Activated CD4-positive, alpha-beta T cell treated with anti-CD3 and anti-CD28 coated beads, Interleukin-2, amount 10 ng/mL, durations not matched to agents 24 days and 14 days (primary cell): ENCODE measurements at regions of chr2 and their contacts with region 1.

Region 1: GRCh38 chr2:190843874-190844699 is 36.5 kb upstream of the GLS start:
- DNase-seq: peak; percentile 72
- H3K4me3 Mint-ChIP-seq: peak overlapping the region; percentile 60
- H3K27ac Mint-ChIP-seq: peak overlapping the region; percentile 87
- H3K4me1 Mint-ChIP-seq: peaks cover 25% of the 10 kb centered on the region
- H3K27me3 Mint-ChIP-seq: no peaks in the 10 kb centered on the region

Region 2: DNA sequence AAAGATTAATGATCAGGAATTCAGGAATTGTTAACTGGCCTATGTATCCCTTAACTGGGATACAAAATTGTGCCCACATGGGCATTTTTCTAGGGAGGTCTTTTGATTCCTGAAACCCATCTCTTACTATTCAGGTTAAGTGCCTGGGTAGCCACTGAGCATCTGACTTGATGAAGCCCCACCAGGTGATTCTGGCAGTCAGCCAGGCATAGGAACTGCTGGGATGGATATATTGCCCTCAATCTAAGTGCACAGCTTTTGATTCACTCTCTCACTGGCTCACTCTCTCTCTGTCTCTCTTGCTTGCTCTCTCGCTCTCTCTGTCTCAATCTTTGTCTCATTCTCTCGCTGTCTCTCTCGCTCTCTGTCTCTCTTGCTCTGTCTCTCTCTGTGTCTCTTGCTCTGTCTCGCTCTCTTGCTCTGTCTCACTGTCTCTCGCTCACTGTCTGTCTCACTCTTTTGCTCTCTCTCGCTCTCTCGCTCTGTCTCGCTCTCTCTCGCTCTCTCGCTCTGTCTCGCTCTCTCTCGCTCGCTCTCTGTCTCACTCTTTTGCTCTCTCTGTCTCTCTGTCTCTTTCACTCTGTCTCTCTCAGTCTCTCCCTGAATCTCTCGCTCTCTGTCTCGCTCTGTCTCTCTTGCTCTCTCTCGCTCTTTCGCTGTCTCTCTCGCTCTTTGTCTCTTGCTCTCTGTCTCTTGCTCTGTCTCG is 478.4 kb before region 1 on chr2:
- intact Hi-C with region 1: no loop called
- DNase-seq: no peak
- H3K4me3 Mint-ChIP-seq: no peak overlapping the region
- H3K27ac Mint-ChIP-seq: no peak overlapping the region
- H3K4me1 Mint-ChIP-seq: peaks cover 8% of the 10 kb centered on the region
- H3K27me3 Mint-ChIP-seq: no peaks in the 10 kb centered on the region

Region 3: DNA sequence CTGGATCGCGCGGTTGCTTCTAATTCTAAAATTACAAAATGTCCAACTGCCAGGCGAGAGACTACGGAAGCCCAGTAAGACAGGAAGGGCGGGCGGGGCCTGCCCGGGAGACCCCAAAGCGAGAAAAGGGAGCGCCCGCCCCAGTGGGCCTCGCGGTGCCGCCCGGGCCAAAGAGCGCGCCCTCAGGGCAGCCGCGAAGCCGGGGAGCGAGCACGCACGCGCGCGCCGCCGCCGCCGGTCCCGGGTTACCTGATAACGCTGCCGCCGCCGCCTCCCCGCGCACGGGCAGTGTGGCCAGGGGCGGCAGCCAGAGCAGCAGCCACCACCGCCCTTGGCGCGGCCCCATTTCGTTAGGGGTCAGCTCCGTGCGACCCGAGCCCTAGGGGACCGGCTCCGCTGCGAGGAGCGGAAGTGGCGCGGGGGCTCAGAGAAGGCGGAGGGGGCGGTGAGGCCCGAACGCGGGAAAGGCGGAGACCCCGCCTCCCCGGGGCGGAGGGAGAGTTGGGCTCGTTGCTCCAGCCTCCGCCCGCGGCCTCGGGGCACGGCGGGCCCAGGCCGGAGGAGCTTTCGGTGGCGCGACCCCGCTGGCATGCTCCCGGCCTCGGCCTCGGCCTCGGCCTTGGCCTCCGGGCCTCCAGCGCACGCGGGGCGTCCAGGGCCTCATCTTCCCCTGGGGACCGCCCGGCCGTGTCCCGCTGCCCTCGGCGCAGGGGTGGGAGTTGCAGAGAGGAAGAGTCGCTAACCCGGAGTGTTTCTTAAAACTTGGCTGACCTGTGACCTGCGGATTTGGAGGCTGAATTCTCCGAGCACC is 309.6 kb before region 1 on chr2 and contains the start of gene NEMP2:
- intact Hi-C with region 1: loop called (anchors 2 kb)
- DNase-seq: peak; percentile 95
- H3K4me3 Mint-ChIP-seq: peak within 1 kb of the TSS; percentile 93
- H3K27ac Mint-ChIP-seq: peak within 1 kb of the TSS; percentile 99
- H3K4me1 Mint-ChIP-seq: peaks cover 41% of the 10 kb centered on the region
- H3K27me3 Mint-ChIP-seq: no peaks in the 10 kb centered on the region
- total RNA-seq, gene NEMP2: 16.4 and 19.0 TPM in 2 replicates

Region 4: DNA sequence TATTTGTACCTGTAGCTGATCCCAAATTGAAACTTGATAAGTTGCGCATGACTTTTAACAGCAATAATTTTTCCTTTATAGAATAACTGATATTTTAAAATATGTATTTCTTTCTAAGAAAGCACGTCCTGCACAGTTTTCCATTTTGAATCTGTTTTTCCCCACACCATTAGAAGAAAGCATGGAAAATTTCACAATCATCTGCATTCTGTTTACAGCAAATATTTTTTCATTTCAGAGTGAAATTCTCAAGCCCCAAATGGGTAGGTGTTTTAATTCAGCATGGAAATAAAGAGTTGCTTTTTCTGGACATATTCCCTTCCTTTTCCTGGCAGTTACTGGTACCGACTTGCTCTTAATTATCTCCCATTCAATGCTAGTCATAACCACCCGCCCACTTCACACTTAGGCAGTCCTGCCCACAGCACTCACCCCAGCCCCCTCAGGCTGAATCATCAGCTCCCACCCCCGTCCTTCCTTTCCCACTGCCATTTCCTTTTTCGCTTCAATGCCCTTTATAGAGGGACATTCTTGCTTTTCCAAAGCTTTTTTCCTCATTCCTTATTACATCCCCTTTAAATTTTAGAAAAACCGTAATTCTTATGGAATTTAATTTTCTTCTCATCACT is 52.6 kb before region 1 on chr2:
- intact Hi-C with region 1: loop called (anchors 1 kb)
- DNase-seq: no peak
- H3K4me3 Mint-ChIP-seq: peak overlapping the region; percentile 53
- H3K27ac Mint-ChIP-seq: peak overlapping the region; percentile 86
- H3K4me1 Mint-ChIP-seq: peaks cover 66% of the 10 kb centered on the region
- H3K27me3 Mint-ChIP-seq: no peaks in the 10 kb centered on the region

Region 5: GRCh38 chr2:191245046-191245868 is 401.2 kb after region 1 on chr2 and contains the start of gene MYO1B:
- intact Hi-C with region 1: no loop called
- DNase-seq: peak; percentile 88
- H3K4me3 Mint-ChIP-seq: peak within 1 kb of the TSS; percentile 88
- H3K27ac Mint-ChIP-seq: peak within 1 kb of the TSS; percentile 77
- H3K4me1 Mint-ChIP-seq: peaks cover 17% of the 10 kb centered on the region
- H3K27me3 Mint-ChIP-seq: peaks cover 21% of the 10 kb centered on the region
- total RNA-seq, gene MYO1B: 16.4 and 21.1 TPM in 2 replicates